ENCODE measurements at regions of chr1 and their contacts with region 1.

Region 1: DNA sequence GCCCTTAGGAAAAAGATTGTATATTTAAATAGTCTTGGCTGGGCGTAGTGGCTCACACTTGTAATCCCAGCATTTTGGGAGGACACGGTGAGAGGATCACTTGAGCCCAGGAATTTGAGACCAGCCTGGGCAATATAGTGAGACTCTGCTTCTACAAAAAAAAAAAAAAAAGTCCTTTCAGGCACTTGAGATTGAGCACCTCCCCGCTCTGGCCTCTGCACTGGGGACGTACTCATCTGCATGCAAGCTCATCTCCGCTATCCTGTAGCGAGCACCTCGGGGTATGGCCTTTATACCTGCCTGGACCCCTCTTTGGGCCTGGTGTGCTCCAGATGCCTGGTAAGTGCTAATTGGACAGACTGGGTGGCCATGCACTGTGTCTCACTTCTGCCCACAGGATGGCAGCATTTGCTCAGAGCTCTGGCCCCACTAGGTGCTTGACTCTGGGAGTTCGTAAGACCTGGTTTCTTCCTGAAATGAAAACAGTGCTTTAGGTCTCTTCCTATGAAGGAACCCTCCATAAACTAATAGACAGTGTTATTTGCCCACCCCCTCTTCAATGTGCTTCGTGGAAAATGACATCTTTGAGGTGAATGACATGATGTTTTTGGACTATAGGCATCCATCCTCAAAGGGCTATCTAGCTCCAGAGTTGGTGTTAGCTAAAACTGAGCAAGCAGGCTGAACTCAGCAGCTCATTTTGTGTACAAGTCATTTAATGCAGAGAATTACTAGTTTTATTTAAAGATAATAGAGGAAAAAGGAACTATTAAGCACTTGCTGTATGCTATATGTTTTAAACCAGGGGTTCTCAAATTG is 61.7 kb upstream of the ADAR start:
- DNase-seq: peak; percentile 66
- H3K4me3 ChIP-seq: no peak overlapping the region
- H3K27ac ChIP-seq: no peak overlapping the region
- H3K4me1 ChIP-seq: no peaks in the 10 kb centered on the region
- H3K27me3 ChIP-seq: no peaks in the 10 kb centered on the region
- CTCF ChIP-seq: peak; percentile 56 to 72 (median 62)
- EP300 ChIP-seq: no peak
- POLR2A ChIP-seq: no peak

Region 2: GRCh38 chr1:154453574-154454352 is 215.9 kb before region 1 on chr1:
- in situ Hi-C with region 1: no loop called
- intact Hi-C with region 1: no loop called
- DNase-seq: no peak
- H3K4me3 ChIP-seq: no peak overlapping the region
- H3K27ac ChIP-seq: no peak overlapping the region
- H3K4me1 ChIP-seq: peaks cover 0 to 16% (median 5%) of the 10 kb centered on the region in 4 donors
- H3K27me3 ChIP-seq: no peaks in the 10 kb centered on the region
- CTCF ChIP-seq: no peak
- EP300 ChIP-seq: no peak
- POLR2A ChIP-seq: no peak

Region 3: GRCh38 chr1:154627257-154628120 is 42.2 kb before region 1 on chr1:
- in situ Hi-C with region 1: no loop called
- intact Hi-C with region 1: no loop called
- DNase-seq: peak; percentile 94
- H3K4me3 ChIP-seq: peak overlapping the region; percentile 70 to 92 (median 82)
- H3K27ac ChIP-seq: peak overlapping the region; percentile 87 to 94 (median 90)
- H3K4me1 ChIP-seq: peaks cover 9 to 18% (median 11%) of the 10 kb centered on the region in 4 donors
- H3K27me3 ChIP-seq: peaks cover 5% of the 10 kb centered on the region
- CTCF ChIP-seq: no peak
- EP300 ChIP-seq: no peak
- POLR2A ChIP-seq: peak; percentile 26

Region 4: DNA sequence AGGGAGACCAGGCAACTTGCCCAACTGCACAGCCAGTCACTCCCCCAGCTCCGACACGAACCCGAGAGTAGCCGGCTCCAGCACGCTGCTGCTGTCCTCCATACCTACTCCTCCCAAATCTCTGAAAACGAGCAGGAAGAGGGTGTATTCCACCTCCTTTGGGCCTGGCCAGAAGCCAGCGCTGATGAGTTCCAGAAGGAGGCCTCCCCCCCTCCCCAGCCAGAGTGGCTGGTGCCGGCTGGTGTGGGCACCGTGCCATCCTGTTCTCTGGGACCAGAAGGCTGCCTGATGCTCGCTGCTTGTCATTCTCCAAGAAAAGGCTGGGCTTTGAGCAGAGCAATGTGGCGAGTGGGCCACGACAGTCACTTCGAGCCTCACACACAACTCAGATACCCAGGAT is 178.2 kb after region 1 on chr1:
- in situ Hi-C with region 1: no loop called
- intact Hi-C with region 1: no loop called
- DNase-seq: no peak
- H3K4me3 ChIP-seq: no peak overlapping the region
- H3K27ac ChIP-seq: peak overlapping the region in 1 of 4 donors; percentile 30
- H3K4me1 ChIP-seq: peaks cover 0 to 4% (median 0%) of the 10 kb centered on the region in 4 donors
- H3K27me3 ChIP-seq: no peaks in the 10 kb centered on the region
- CTCF ChIP-seq: no peak
- EP300 ChIP-seq: no peak
- POLR2A ChIP-seq: no peak

Region 5: DNA sequence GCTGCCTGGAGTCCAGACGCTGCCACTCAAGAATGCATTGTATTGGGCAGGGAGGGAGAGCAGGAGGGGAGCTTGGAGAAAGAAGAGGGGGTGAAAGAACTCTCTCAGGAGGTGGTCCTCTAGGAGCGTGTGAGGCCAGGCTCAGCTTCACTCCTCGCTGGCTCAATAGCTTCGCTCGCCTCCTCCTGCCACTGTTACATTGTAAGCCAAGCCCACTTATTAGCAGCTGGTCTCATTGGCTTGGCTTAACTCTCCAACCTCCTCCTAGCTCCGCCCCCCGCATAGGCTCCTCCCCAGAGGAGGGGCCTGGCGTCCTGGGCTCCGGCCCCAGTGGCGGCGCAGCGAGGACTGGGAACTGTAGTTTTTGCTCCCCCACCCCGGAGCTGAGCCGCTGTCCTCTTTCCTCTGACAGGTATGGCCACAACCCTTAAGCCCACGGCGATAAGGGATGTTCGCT is 200.5 kb after region 1 on chr1 and contains the start of gene KCNN3:
- in situ Hi-C with region 1: loop called in 2 of 4 experiments (anchors 10 to 25 kb)
- intact Hi-C with region 1: loop called (anchors 10 kb)
- DNase-seq: peak; percentile 92
- H3K4me3 ChIP-seq: peak within 1 kb of the TSS; percentile 11 to 26 (median 18)
- H3K27ac ChIP-seq: peak within 1 kb of the TSS in 3 of 4 donors; percentile 18 to 61 (median 29)
- H3K4me1 ChIP-seq: peaks cover 0 to 20% (median 14%) of the 10 kb centered on the region in 4 donors
- H3K27me3 ChIP-seq: peaks cover 32% of the 10 kb centered on the region
- CTCF ChIP-seq: no peak
- EP300 ChIP-seq: no peak
- POLR2A ChIP-seq: no peak
- total RNA-seq, gene KCNN3: 2.3 to 5.0 (median 3.5) TPM

Region 6: GRCh38 chr1:154878371-154879022 is 208.8 kb after region 1 on chr1:
- in situ Hi-C with region 1: loop called (anchors 10 to 25 kb)
- intact Hi-C with region 1: loop called (anchors 10 kb)
- DNase-seq: peak; percentile 80
- H3K4me3 ChIP-seq: no peak overlapping the region
- H3K27ac ChIP-seq: no peak overlapping the region
- H3K4me1 ChIP-seq: peaks cover 0 to 8% (median 3%) of the 10 kb centered on the region in 4 donors
- H3K27me3 ChIP-seq: no peaks in the 10 kb centered on the region
- CTCF ChIP-seq: peak; percentile 81 to 87 (median 85)
- EP300 ChIP-seq: no peak
- POLR2A ChIP-seq: no peak

Region 7: DNA sequence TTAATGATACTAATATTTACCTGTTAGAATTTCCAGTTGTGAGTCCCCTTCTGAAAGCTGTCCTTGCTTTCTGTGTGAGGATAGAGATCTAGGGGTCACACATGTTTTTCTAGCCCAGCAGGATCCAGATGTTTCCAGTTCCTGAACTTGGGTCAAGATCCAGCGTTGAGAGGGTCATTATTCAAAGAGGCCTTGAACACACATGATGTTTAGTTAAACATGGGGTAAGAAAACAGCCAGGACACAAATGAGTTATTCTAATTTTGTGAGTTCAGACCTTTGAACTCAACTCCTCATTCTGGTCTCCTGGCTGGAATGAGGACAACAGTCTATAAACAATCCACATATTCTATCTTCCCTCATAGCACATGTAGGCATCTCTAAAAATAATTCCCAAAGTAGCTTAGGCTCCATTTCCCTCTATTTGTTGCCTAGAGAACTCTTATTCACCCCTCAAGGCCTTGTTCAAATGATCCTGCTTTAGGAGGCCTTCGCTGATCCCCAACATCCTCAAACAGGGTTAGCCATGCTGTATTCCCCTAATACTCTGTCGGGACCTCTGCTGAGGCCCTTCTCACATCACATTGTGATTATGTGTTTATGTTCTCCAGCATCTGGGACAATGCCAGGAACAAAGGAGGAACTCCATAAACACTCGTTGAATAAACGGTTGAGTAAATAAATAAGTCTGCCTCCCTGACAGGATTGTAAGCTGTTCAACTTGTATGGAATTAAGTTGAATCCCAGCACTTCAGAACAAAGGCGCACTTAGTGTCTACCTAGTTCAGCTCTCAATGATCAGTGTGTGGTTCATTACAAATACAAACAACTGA is 215.4 kb after region 1 on chr1:
- in situ Hi-C with region 1: loop called in 3 of 4 experiments (anchors 10 to 25 kb)
- intact Hi-C with region 1: no loop called
- DNase-seq: no peak
- H3K4me3 ChIP-seq: no peak overlapping the region
- H3K27ac ChIP-seq: no peak overlapping the region
- H3K4me1 ChIP-seq: no peaks in the 10 kb centered on the region
- H3K27me3 ChIP-seq: no peaks in the 10 kb centered on the region
- CTCF ChIP-seq: no peak
- EP300 ChIP-seq: no peak
- POLR2A ChIP-seq: no peak